ENCODE measurements at regions of chr12 and their contacts with region 1.

Region 1: GRCh38 chr12:87995581-87996178 is 33.5 kb downstream of the C12orf50 start:
- DNase-seq: peak; percentile 54
- ATAC-seq: peak; percentile 95
- H3K4me3 ChIP-seq: no peak overlapping the region
- H3K27ac ChIP-seq: no peak overlapping the region
- H3K4me1 ChIP-seq: no peaks in the 10 kb centered on the region
- H3K27me3 ChIP-seq: no peaks in the 10 kb centered on the region
- CTCF ChIP-seq: peak; percentile 83

Region 2: DNA sequence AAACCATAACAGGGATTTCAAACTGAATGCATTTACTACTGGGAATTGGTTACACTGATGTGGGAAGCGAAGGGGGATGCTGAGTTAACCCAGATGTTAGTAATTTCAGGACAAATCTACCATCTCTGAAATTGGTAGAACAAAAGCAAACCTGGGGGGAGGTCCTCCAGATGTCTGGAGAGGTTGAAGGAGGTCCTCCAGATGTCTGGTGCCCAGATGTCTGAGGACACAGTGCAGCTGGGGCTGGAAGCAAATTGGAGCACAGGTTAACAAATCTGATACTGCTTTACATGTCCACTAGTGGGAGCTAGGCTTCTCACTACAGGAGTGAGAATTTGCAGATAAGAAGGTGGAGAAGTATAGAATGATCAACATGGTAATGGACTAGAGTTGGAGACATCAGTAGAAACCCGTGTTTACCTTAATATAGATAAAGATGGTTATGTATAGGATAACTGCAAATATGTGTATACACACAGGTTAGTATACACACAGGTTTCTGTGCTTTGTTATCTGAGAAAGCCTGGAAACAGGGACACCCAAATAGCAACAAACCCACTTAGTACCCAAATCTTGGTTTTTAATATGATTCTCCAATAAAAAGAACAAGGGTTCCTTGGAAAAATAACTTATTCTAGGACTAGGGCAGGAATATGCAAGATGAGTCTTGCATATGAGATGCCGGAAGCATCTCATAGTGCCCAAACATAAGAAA is 128.9 kb before region 1 on chr12:
- CTCF ChIA-PET with region 1: no interaction called
- POLR2A ChIA-PET with region 1: no interaction called
- in situ Hi-C with region 1: no loop called
- intact Hi-C with region 1: loop called (anchors 10 kb)
- DNase-seq: no peak
- ATAC-seq: no peak; the same call in 1 of the 2 replicates
- H3K4me3 ChIP-seq: no peak overlapping the region
- H3K27ac ChIP-seq: no peak overlapping the region
- H3K4me1 ChIP-seq: no peaks in the 10 kb centered on the region
- H3K27me3 ChIP-seq: no peaks in the 10 kb centered on the region
- CTCF ChIP-seq: peak; percentile 53